Ovary (tissue), 10 donors: ENCODE measurements at regions of chr17 and their contacts with region 1.

Region 1: GRCh38 chr17:69335058-69335457 is 8.1 kb upstream of the ABCA5 start:
- DNase-seq: no peak
- H3K4me3 ChIP-seq: no peak overlapping the region
- H3K27ac ChIP-seq: no peak overlapping the region
- H3K4me1 ChIP-seq: no peaks in the 10 kb centered on the region
- H3K27me3 ChIP-seq: no peaks in the 10 kb centered on the region
- CTCF ChIP-seq: peak in 1 of 3 donors; percentile 19
- EP300 ChIP-seq: no peak
- POLR2A ChIP-seq: no peak

Region 2: GRCh38 chr17:69154267-69154666 is 180.8 kb before region 1 on chr17:
- intact Hi-C with region 1: no loop called
- DNase-seq: no peak
- H3K4me3 ChIP-seq: no peak overlapping the region
- H3K27ac ChIP-seq: no peak overlapping the region
- H3K4me1 ChIP-seq: peaks cover 4% of the 10 kb centered on the region
- H3K27me3 ChIP-seq: no peaks in the 10 kb centered on the region
- CTCF ChIP-seq: no peak
- EP300 ChIP-seq: no peak
- POLR2A ChIP-seq: no peak

Region 3: DNA sequence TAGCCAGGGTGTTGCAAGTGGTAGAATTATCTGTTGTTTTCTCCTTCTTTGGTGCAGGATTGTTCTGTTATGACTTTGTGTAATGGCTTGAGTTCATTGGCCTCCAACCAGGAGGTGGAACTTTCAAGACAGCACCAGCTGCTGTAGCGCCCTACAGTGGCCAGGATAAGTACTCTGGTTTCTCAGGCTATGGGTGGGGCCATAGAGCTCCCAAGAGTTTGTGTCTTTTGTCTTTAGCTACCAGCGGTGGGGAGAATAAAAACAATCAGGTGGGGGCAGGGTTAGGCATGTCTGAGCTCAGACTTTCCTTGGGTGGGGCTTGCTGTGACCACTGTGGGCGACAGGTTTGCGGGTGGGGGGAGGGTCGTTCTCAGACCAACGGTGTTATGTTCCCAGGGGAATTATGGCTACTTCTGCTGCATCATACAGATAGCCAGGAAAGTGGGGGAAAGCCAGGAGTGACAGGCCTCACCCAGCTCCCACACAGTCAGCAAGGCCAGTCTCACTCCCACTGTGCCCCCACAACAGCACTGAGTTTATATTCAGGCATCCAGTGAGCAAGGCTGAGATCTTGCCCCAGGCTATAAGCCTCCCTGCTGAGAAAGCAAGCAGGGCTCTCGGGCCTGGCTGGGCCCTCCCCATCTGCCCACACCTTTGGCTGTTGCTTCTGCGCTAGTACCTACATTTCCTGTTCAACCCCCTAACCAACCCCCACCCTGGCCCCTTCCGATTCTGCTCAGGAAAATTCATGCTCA is 121.8 kb before region 1 on chr17:
- intact Hi-C with region 1: no loop called
- DNase-seq: no peak
- H3K4me3 ChIP-seq: no peak overlapping the region
- H3K27ac ChIP-seq: no peak overlapping the region
- H3K4me1 ChIP-seq: no peaks in the 10 kb centered on the region
- H3K27me3 ChIP-seq: no peaks in the 10 kb centered on the region
- CTCF ChIP-seq: no peak
- EP300 ChIP-seq: no peak
- POLR2A ChIP-seq: no peak

Region 4: DNA sequence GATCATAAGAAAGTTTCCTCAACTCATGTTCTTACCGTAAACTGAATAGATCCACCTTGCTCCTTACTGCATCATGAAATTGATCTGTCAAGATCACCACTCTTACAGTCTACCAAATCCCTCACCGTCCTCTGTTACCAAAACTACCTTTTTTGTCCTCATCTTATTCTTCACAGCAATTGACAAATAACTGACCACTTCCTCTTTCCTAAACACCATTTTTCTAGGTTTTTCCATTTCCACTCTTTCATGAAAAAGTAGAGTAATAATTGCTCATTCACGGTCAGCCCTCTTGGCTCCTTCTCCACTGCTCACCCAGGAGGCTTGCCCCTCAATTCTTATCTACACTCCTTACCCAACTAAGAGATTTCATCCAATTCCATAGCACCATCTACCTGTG is 53.1 kb before region 1 on chr17:
- intact Hi-C with region 1: no loop called
- DNase-seq: no peak
- H3K4me3 ChIP-seq: no peak overlapping the region
- H3K27ac ChIP-seq: no peak overlapping the region
- H3K4me1 ChIP-seq: no peaks in the 10 kb centered on the region
- H3K27me3 ChIP-seq: no peaks in the 10 kb centered on the region
- CTCF ChIP-seq: no peak
- EP300 ChIP-seq: no peak
- POLR2A ChIP-seq: no peak

Region 5: GRCh38 chr17:69523244-69523861 is 188.3 kb after region 1 on chr17:
- intact Hi-C with region 1: loop called in 1 of 4 experiments (anchors 10 kb)
- DNase-seq: peak in 1 of 5 donors; percentile 24
- H3K4me3 ChIP-seq: no peak overlapping the region
- H3K27ac ChIP-seq: no peak overlapping the region
- H3K4me1 ChIP-seq: no peaks in the 10 kb centered on the region
- H3K27me3 ChIP-seq: no peaks in the 10 kb centered on the region
- CTCF ChIP-seq: peak in 2 of 3 donors; percentile 42 to 61
- EP300 ChIP-seq: no peak
- POLR2A ChIP-seq: no peak